ENCODE measurements at regions of chr14 and their contacts with region 1.

Region 1: GRCh38 chr14:54175298-54175942 is 218.8 kb upstream of the BMP4 start:
- DNase-seq: peak in 2 of 4 donors; percentile 82 to 85
- ATAC-seq: peak; percentile 83
- H3K4me3 ChIP-seq: no peak overlapping the region
- H3K27ac ChIP-seq: no peak overlapping the region
- H3K4me1 ChIP-seq: peaks cover 0 to 3% of the 10 kb centered on the region in 2 donors
- H3K27me3 ChIP-seq: peaks cover 0 to 5% of the 10 kb centered on the region in 2 donors
- CTCF ChIP-seq: peak; percentile 64 to 92

Region 2: GRCh38 chr14:53539489-53540126 is 635.8 kb before region 1 on chr14:
- intact Hi-C with region 1: loop called in 1 of 2 experiments (anchors 10 kb)
- DNase-seq: peak in 3 of 4 donors; percentile 65 to 90 (median 82)
- ATAC-seq: peak; percentile 96
- H3K4me3 ChIP-seq: no peak overlapping the region
- H3K27ac ChIP-seq: no peak overlapping the region
- H3K4me1 ChIP-seq: peaks cover 4% of the 10 kb centered on the region in 2 donors
- H3K27me3 ChIP-seq: no peaks in the 10 kb centered on the region
- CTCF ChIP-seq: peak; percentile 64 to 82

Region 3: GRCh38 chr14:54058505-54058904 is 116.9 kb before region 1 on chr14:
- intact Hi-C with region 1: no loop called
- DNase-seq: no peak
- ATAC-seq: no peak
- H3K4me3 ChIP-seq: no peak overlapping the region
- H3K27ac ChIP-seq: no peak overlapping the region
- H3K4me1 ChIP-seq: no peaks in the 10 kb centered on the region
- H3K27me3 ChIP-seq: no peaks in the 10 kb centered on the region
- CTCF ChIP-seq: no peak